ENCODE measurements at regions of chr18 and their contacts with region 1.

Region 1: DNA sequence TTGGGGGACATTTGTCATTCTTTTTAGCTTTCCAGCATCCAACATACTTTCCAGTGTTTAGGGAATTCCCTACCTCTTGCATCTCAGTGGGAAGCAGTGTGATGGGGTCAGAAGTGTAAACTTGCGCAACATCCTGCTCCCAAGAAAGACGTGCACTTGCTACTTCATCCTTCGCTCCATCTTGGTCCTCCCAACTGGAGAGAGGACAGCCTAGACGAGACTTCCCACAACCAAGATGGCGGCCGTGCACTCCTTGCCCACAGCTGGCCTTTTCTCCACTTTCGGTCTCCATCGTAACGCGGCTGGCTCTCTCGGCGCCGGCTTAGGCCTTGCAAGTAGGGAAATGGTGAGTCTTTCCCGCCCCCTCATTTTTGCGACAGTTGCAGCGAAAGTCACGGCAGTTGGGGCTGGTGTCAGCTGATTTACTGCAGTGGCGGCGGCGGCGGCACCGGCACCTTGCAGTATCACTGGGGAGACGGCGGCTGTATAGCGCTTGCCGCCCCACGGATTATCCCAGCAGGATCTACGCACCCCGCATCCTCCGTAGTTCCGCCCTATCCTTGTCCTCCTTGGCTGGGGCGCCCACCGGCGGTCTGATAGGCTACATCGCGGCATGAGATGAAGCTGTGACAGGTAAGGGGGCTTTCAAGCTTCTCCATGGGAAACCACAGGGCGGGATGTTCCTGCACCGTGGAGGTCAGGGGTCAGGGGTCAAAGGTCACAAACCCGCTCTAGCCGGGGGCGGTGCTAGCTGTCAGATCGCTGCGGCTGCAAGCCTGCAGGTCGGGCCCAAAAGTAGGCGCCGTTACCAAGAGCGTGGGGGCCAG is at the start of gene WDR7:
- DNase-seq: peak; percentile 98
- ATAC-seq: peak; percentile 90
- H3K4me3 Mint-ChIP-seq: peak within 1 kb of the TSS; percentile 98
- H3K27ac Mint-ChIP-seq: peak within 1 kb of the TSS; percentile 97
- H3K4me1 Mint-ChIP-seq: peaks cover 44% of the 10 kb centered on the region
- H3K27me3 Mint-ChIP-seq: no peaks in the 10 kb centered on the region
- CTCF ChIP-seq: no peak
- total RNA-seq, gene WDR7: 16.0 to 19.0 TPM

Region 2: DNA sequence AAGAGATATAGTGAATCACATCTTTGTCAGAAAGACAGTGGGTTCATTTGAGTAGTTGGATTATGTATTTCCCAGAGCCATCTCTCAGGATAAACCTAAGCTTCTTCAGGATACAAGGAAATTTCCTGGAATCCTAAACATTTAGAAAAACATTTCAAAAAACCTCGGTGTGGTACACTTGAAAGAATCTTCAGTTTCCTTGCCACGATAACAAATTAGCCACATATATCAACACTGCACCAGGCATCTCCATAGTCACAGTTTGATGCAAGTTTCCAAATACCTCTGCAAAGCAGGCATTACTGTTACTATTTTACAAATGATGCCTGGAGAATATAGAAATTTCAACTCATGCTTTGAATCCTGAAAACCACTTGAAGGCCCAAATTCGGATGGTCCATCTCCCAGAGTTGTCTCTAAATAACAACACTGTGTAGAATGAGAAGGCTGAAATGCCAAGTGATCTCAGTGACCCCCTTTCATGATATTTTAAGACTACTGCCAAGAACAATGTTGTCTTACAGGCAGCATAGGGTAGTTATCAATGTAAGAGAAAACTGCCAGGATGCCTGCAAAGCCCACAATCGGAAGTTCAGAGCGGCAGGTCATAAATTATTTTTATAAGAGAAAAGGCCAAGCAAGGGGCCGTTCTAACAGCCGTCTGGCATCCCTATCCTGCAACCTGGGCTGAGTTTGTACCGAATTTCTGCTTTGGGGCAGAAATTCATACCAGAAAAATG is 320.6 kb before region 1 on chr18:
- CTCF ChIA-PET with region 1: no interaction called
- POLR2A ChIA-PET with region 1: no interaction called
- intact Hi-C with region 1: no loop called
- DNase-seq: no peak
- ATAC-seq: no peak
- H3K4me3 Mint-ChIP-seq: no peak overlapping the region
- H3K27ac Mint-ChIP-seq: no peak overlapping the region
- H3K4me1 Mint-ChIP-seq: no peaks in the 10 kb centered on the region
- H3K27me3 Mint-ChIP-seq: no peaks in the 10 kb centered on the region
- CTCF ChIP-seq: no peak

Region 3: DNA sequence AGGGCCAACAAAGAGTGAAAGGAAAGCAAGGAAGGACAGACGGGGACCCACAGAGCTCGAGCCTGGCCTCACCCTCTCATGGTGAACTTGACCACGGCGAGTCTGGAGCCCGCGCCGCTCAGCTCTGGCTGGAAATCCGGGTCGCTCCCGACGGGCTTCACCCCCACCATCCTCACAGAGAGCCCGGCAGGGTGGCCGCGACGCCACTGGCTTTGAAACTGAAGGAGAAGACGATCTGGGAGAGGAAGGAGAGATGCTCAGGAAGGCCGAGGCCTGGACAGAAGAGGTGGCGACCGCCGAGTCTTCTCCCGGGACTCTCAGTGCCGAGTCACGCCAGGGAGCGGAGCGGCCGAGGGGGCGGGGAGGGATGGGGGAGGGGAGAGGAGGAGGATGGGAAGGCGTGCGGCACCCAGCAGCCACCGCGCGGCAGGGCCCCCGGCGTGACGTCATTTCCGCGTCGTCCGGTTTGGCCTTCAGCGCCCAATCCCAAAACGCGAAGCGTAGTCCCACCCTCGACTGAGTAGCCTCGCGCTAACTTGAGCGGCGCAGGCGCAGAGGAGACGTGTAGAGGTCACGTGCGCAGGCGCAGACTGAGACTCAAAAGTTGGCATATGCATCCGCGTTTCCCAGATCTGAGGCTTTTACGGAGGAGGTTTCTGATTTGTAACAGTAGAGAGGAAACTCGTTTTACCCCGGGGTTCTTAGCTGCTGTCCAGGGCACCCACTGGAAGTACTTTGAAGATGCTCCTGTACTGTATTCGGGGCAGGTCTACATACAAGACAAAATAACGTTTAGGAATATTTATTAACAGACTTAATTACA is 12.7 kb before region 1 on chr18 and contains the start of gene TXNL1:
- CTCF ChIA-PET with region 1: interaction called, 3 read pairs
- POLR2A ChIA-PET with region 1: interaction called, 29 read pairs
- intact Hi-C with region 1: no loop called
- DNase-seq: peak; percentile 98
- ATAC-seq: peak; percentile 99
- H3K4me3 Mint-ChIP-seq: peak within 1 kb of the TSS; percentile 100
- H3K27ac Mint-ChIP-seq: peak within 1 kb of the TSS; percentile 96
- H3K4me1 Mint-ChIP-seq: peaks cover 31% of the 10 kb centered on the region
- H3K27me3 Mint-ChIP-seq: no peaks in the 10 kb centered on the region
- CTCF ChIP-seq: no peak
- total RNA-seq, gene TXNL1: 72.8 to 74.5 TPM

Region 4: DNA sequence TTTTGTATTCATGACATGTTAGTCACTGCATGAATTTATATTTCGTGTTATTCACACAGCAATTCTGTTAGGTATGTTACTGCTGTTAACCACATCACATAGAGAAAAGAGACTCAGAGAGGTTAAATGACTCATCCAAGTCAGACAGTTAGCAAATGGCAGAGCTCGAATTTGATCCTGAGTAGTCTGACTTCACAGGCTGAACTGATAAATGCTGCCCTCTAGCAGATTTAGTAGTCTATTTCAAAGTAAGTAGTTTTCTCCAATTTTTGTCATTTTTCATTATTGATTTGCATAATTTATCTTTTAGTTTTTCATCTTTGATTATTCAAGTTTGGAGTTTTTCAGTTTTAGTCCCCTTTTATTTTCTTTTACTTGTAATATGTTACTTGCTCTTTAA is 58.3 kb after region 1 on chr18:
- CTCF ChIA-PET with region 1: interaction called, 12 read pairs
- POLR2A ChIA-PET with region 1: no interaction called
- intact Hi-C with region 1: no loop called
- DNase-seq: peak; percentile 45
- ATAC-seq: peak; percentile 99
- H3K4me3 Mint-ChIP-seq: no peak overlapping the region
- H3K27ac Mint-ChIP-seq: no peak overlapping the region
- H3K4me1 Mint-ChIP-seq: peaks cover 13% of the 10 kb centered on the region
- H3K27me3 Mint-ChIP-seq: no peaks in the 10 kb centered on the region
- CTCF ChIP-seq: peak; percentile 58